Right cardiac atrium (tissue), 5 donors: ENCODE measurements at regions of chr14 and their contacts with region 1.

Region 1: DNA sequence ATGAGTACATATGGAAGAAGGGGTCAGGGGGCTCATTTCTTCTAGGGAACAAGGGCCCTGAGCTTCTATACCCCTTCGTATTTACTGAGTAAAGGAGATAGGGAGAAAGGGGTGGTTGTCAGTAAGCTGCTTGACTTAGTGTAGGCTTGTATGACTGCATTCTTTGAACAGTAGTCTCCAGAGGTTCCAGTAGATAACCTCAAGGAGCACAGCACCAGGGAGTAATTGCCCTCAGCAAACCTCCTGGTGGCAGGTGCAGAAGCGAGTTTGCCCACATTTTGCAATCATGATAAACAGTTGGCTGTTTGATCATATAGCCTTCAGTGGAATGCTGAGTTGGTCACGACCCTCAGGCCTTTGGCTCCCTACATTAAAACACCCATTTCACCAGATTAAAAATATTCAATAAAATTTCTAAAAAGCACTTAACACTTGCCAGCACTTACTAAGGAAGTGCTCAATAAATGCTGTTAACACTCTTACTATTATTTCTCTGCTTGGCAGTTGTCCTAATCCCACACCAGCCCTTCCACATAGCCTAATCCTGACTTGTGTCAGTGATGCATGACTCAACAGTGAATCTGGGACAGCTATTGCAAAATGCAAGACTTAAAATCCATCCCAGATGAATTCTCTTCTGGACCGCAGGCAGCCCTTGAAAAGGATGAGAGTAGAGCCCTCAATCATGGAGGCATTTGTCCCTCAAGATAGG is 3.7 kb upstream of the DHRS4L2 start:
- DNase-seq: peak in 2 of 3 donors; percentile 20 to 33
- ATAC-seq: peak; percentile 47 to 67
- H3K4me3 ChIP-seq: no peak overlapping the region
- H3K27ac ChIP-seq: no peak overlapping the region
- H3K4me1 ChIP-seq: no peaks in the 10 kb centered on the region
- H3K27me3 ChIP-seq: no peaks in the 10 kb centered on the region

Region 2: DNA sequence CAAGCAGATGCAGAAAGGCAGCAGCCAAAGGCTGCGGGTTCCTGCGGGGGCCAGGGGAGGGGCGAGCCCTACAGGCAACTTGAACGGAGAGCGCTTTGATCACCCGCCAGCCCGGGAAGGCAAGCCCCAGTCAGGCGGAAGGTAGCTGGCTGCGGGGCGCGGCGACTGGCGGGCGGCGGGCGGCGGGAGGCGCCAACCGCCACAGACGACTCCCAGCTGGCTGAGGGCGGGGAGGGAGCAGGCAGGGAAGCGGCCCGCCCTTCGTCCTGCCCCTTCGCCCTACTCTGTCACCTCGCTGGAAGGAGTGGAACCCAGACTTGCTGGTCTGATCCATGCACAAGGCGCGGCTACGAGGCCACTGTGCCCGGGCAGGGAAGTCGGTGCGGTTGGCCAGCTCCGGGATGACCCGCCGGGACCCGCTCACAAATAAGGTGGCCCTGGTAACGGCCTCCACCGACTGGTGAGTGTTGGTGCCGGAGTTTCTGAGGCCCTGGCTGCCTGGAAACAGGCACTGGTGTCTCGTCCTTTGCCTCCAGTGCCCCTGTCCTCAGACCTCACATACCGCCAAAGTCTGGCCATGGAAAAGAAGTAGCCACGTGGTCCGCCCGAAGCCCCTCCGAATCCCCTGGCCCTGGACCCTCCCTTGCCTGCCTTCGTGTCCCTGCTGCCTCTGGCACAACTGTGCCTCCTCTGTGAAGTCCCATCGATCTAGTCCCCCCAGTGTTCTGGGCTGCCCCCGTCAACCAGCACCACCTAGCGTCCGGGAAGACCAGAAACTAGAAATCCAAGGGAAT is 51.3 kb after region 1 on chr14:
- intact Hi-C with region 1: loop called in 1 of 4 experiments (anchors 5 kb)
- DNase-seq: peak; percentile 88 to 96 (median 94)
- ATAC-seq: peak; percentile 98
- H3K4me3 ChIP-seq: peak overlapping the region; percentile 23
- H3K27ac ChIP-seq: peak overlapping the region; percentile 67
- H3K4me1 ChIP-seq: no peaks in the 10 kb centered on the region
- H3K27me3 ChIP-seq: no peaks in the 10 kb centered on the region